Tibial artery (tissue), 4 donors: ENCODE measurements at regions of chr17 and their contacts with region 1.

Region 1: DNA sequence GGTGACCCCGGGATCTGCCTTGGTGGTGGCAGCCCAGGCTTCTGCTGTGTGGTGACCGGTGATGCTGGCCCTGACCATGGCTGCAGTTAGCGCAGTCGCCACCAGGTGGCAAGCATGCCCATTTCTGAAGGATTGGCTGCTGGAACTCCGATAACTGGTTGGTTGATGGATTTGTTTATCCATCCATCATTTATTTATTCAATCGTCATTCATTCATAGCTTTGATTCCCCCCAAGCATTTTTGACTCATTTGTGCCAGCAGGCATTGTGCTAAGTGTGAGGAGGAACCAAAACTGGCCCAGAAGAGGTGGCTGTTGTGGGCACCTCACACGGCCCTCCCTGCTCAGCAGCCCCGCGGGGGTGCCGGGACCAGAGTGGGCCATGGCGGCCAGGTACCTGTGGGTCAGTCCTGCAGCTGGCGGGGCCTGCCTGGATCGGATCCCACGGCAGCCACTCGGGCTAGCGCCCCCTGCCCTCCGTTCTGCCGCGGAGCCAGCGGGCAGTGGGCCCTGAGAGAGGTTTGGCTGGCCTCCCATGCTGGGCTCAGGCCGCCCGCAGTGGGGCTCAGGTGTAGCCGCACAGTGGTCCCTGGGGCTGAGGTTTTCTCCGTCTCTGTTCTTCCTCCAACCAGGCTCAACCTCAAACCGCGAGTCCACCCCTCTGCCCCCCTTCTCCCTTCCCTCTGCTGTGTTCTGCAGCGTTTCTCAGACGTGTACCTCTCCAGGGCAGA is 28.8 kb upstream of the ITGA3 start:
- DNase-seq: peak; percentile 88 to 92
- H3K4me3 ChIP-seq: peak overlapping the region; percentile 41 to 53
- H3K27ac ChIP-seq: peak overlapping the region; percentile 83 to 89
- H3K4me1 ChIP-seq: peaks cover 0 to 41% (median 22%) of the 10 kb centered on the region in 4 donors
- H3K27me3 ChIP-seq: no peaks in the 10 kb centered on the region
- CTCF ChIP-seq: peak; percentile 95 to 97

Region 2: DNA sequence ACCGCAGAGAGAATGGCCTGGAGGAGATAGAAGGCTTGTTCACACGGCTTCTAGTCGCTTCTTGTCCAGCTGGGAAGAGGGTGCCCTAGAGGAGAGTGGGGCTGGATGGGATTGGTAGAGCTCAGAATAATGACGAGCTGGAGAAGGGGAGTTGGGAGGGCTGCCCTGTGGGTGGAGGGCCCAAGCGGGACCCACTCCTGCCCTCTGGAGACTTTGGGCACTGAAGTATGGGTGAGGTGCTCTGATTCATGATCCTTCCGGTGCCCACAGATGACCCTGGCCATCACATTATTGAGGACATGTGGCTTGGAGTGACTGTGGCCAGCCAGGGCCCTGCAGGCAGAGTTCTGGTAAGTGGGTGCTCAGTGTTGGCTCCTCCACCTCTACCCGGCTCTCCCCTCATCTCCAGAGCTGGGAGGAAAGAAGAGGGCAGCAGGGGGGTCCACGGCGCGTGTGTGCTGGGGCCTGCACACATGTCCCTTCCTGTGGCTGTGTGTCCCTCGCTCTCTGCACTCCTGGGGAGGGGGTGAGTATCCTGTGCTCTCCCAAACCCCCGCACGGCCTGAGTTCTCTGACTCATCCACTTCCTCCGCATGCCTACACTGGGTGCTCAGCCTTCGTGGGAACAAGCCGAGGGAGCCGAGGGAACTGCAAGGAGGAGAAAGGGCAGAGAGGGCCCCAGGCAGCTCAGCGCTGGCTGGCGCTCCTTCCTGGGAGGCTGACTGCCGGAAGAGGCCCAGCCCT is 37.4 kb after region 1 on chr17:
- intact Hi-C with region 1: loop called (anchors 5 kb)
- DNase-seq: peak; percentile 69 to 92
- H3K4me3 ChIP-seq: no peak overlapping the region
- H3K27ac ChIP-seq: peak overlapping the region; percentile 97 to 99
- H3K4me1 ChIP-seq: peaks cover 0 to 87% (median 73%) of the 10 kb centered on the region in 4 donors
- H3K27me3 ChIP-seq: no peaks in the 10 kb centered on the region
- CTCF ChIP-seq: no peak

Region 3: GRCh38 chr17:50087246-50087911 is 60.3 kb after region 1 on chr17:
- intact Hi-C with region 1: loop called (anchors 2 kb)
- DNase-seq: peak; percentile 62 to 81
- H3K4me3 ChIP-seq: no peak overlapping the region
- H3K27ac ChIP-seq: peak overlapping the region; percentile 10 to 37
- H3K4me1 ChIP-seq: no peaks in the 10 kb centered on the region
- H3K27me3 ChIP-seq: no peaks in the 10 kb centered on the region
- CTCF ChIP-seq: peak; percentile 94 to 95

Region 4: DNA sequence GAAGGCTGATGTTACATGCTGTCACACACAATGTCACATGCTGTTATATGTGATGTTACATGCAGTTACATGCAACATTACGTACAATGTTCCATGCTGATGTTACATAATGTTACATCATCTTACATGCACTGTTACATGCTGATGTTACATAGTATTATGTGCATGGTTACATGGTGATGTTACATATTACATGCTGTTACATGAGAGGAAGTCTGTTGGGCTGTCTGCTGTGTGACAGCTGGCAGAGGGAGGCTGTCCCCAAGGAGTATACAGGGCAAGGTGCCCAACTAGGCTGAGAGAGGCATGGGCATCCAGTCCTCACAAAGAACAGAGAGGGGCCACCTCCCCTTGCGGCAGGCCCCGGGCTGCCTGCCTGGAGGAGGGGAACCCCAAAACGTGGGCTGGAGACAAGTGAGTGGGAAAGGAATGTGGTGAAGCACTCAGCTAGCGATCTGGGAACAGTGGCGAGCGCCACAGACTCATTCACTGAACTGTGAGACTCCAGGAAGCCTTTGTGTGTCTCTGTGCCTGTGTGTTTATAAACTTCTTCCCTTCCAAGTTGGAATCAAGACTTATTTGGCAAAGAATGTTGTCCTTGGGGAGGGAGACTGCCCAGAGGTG is 277.8 kb after region 1 on chr17:
- intact Hi-C with region 1: loop called (anchors 10 kb)
- DNase-seq: no peak
- H3K4me3 ChIP-seq: no peak overlapping the region
- H3K27ac ChIP-seq: peak overlapping the region; percentile 21 to 36
- H3K4me1 ChIP-seq: peaks cover 0 to 17% (median 12%) of the 10 kb centered on the region in 4 donors
- H3K27me3 ChIP-seq: peaks cover 0 to under 1% of the 10 kb centered on the region in 2 donors
- CTCF ChIP-seq: no peak